PC-9 (cell line): ENCODE measurements at regions of chr5 and their contacts with region 1.

Region 1: GRCh38 chr5:43432473-43433365 is 20.5 kb upstream of the CCL28 start:
- DNase-seq: peak; percentile 98 to 99
- H3K4me3 ChIP-seq: no peak overlapping the region
- H3K27ac ChIP-seq: peak overlapping the region; percentile 69
- H3K4me1 ChIP-seq: peaks cover 45% of the 10 kb centered on the region
- H3K27me3 ChIP-seq: no peaks in the 10 kb centered on the region
- CTCF ChIP-seq: no peak

Region 2: GRCh38 chr5:42828671-42829070 is 604.0 kb before region 1 on chr5:
- CTCF ChIA-PET with region 1: no interaction called
- POLR2A ChIA-PET with region 1: no interaction called
- intact Hi-C with region 1: no loop called
- DNase-seq: no peak
- H3K4me3 ChIP-seq: no peak overlapping the region
- H3K27ac ChIP-seq: no peak overlapping the region
- H3K4me1 ChIP-seq: no peaks in the 10 kb centered on the region
- H3K27me3 ChIP-seq: peaks cover 10% of the 10 kb centered on the region; the same call in 1 of the 2 replicates
- CTCF ChIP-seq: no peak

Region 3: DNA sequence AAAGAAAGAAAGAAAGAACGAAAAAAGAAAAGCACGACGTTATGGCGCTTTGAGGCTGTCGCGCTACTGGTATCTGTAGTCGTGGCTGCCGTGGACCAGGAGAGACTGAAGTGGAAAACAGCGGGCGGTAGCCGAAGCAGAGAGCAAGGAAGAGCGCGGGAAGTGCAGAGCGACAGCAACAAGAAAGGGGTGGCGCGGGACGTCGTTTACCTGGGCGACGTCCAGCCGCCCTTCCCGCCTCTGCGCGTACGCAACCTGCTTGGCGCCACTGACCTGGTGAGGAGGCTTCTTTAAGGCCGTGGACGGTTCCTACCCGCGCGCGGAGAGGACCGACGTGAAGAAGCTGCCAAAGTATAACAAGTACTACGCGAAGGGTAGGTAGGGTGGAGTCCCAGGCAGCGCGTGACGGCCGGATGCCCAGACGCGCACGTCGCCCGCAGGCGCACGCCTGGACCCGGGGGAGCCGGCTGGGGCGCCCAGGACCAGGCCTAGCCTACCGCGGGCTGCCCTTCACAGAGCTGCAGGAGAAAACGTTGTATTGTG is 35.9 kb before region 1 on chr5:
- CTCF ChIA-PET with region 1: no interaction called
- POLR2A ChIA-PET with region 1: interaction called, 5 read pairs
- intact Hi-C with region 1: loop called (anchors 2 kb)
- DNase-seq: peak in 1 of 2 experiments; percentile 71
- H3K4me3 ChIP-seq: no peak overlapping the region
- H3K27ac ChIP-seq: no peak overlapping the region
- H3K4me1 ChIP-seq: 0 out of 2 replicates have a peak, but pooled peaks cover under 1% of the 10 kb centered on the region
- H3K27me3 ChIP-seq: no peaks in the 10 kb centered on the region
- CTCF ChIP-seq: no peak

Region 4: GRCh38 chr5:43422143-43422542 is 10.6 kb before region 1 on chr5:
- CTCF ChIA-PET with region 1: no interaction called
- POLR2A ChIA-PET with region 1: no interaction called
- intact Hi-C with region 1: loop called (anchors 1 kb)
- DNase-seq: peak; percentile 56 to 95
- H3K4me3 ChIP-seq: no peak overlapping the region
- H3K27ac ChIP-seq: peak overlapping the region; percentile 68
- H3K4me1 ChIP-seq: peaks cover 43% of the 10 kb centered on the region
- H3K27me3 ChIP-seq: no peaks in the 10 kb centered on the region
- CTCF ChIP-seq: no peak

Region 5: GRCh38 chr5:43556857-43557542 is 124.3 kb after region 1 on chr5 and contains the start of gene PAIP1:
- CTCF ChIA-PET with region 1: interaction called, 4 read pairs
- POLR2A ChIA-PET with region 1: no interaction called
- intact Hi-C with region 1: loop called (anchors 5 kb)
- DNase-seq: peak; percentile 86 to 98
- H3K4me3 ChIP-seq: peak within 1 kb of the TSS; percentile 88
- H3K27ac ChIP-seq: peak within 1 kb of the TSS; percentile 76
- H3K4me1 ChIP-seq: peaks cover 34% of the 10 kb centered on the region
- H3K27me3 ChIP-seq: no peaks in the 10 kb centered on the region
- CTCF ChIP-seq: peak; percentile 71
- total RNA-seq, gene PAIP1: 183 and 191 TPM in 2 replicates